ENCODE measurements at regions of chr10 and their contacts with region 1.

Region 1: DNA sequence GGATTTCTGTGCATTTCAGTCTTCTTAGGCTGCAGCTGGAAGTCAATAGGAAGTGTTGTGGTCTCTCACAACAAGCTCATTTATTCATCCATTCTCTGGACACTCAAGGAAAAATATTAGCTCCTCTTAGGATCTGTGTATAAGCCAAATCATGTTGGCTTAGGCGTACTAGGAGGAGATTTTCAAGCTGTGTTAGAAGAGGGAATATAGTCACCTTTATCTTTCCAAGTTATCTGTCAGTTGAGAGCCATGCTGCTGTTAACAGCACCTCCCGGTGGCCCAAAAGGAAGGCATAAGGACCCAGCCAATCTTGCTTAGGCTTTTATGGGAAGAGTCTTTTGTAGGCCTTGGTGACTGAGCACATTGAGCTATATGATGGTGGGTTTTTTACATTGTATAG is 220.0 kb downstream of the LRMDA start:
- DNase-seq: peak; percentile 35
- H3K4me3 ChIP-seq: no peak overlapping the region
- H3K27ac ChIP-seq: no peak overlapping the region
- H3K4me1 ChIP-seq: no peaks in the 10 kb centered on the region
- H3K27me3 ChIP-seq: no peaks in the 10 kb centered on the region
- CTCF ChIP-seq: peak; percentile 47 to 74

Region 2: GRCh38 chr10:75612904-75613684 is 38.3 kb before region 1 on chr10:
- CTCF ChIA-PET with region 1: no interaction called
- dilution Hi-C with region 1: no loop called
- in situ Hi-C with region 1: no loop called
- intact Hi-C with region 1: no loop called
- DNase-seq: no peak
- H3K4me3 ChIP-seq: no peak overlapping the region
- H3K27ac ChIP-seq: no peak overlapping the region
- H3K4me1 ChIP-seq: no peaks in the 10 kb centered on the region
- H3K27me3 ChIP-seq: no peaks in the 10 kb centered on the region
- CTCF ChIP-seq: no peak

Region 3: GRCh38 chr10:76036111-76036940 is 384.9 kb after region 1 on chr10:
- CTCF ChIA-PET with region 1: no interaction called
- dilution Hi-C with region 1: no loop called
- in situ Hi-C with region 1: no loop called
- intact Hi-C with region 1: loop called (anchors 1 kb)
- DNase-seq: peak; percentile 45
- H3K4me3 ChIP-seq: no peak overlapping the region
- H3K27ac ChIP-seq: no peak overlapping the region
- H3K4me1 ChIP-seq: peaks cover 4% of the 10 kb centered on the region
- H3K27me3 ChIP-seq: no peaks in the 10 kb centered on the region
- CTCF ChIP-seq: peak; percentile 86 to 91

Region 4: GRCh38 chr10:76086761-76087639 is 435.6 kb after region 1 on chr10:
- CTCF ChIA-PET with region 1: interaction called, 3 read pairs
- dilution Hi-C with region 1: no loop called
- in situ Hi-C with region 1: no loop called
- intact Hi-C with region 1: loop called (anchors 10 kb)
- DNase-seq: peak; percentile 56
- H3K4me3 ChIP-seq: no peak overlapping the region
- H3K27ac ChIP-seq: no peak overlapping the region
- H3K4me1 ChIP-seq: peaks cover 12% of the 10 kb centered on the region
- H3K27me3 ChIP-seq: no peaks in the 10 kb centered on the region
- CTCF ChIP-seq: peak; percentile 77 to 84

Measured in mammary epithelial cell (primary cell).